HEK293 (cell line): ENCODE measurements at regions of chr16 and their contacts with region 1.

Region 1: GRCh38 chr16:74275002-74275636 is 21.5 kb upstream of the PSMD7 start:
- H3K4me3 ChIP-seq: no peak overlapping the region
- H3K27ac ChIP-seq: no peak overlapping the region
- H3K4me1 ChIP-seq: no peaks in the 10 kb centered on the region
- CTCF ChIP-seq: peak; percentile 46; the same call in 1 of the 2 replicates

Region 2: GRCh38 chr16:74034862-74035261 is 240.3 kb before region 1 on chr16:
- CTCF ChIA-PET with region 1: interaction called, 14 read pairs
- POLR2A ChIA-PET with region 1: no interaction called
- H3K4me3 ChIP-seq: no peak overlapping the region
- H3K27ac ChIP-seq: no peak overlapping the region
- H3K4me1 ChIP-seq: no peaks in the 10 kb centered on the region; the same call in 1 of the 2 replicates
- CTCF ChIP-seq: no peak

Region 3: DNA sequence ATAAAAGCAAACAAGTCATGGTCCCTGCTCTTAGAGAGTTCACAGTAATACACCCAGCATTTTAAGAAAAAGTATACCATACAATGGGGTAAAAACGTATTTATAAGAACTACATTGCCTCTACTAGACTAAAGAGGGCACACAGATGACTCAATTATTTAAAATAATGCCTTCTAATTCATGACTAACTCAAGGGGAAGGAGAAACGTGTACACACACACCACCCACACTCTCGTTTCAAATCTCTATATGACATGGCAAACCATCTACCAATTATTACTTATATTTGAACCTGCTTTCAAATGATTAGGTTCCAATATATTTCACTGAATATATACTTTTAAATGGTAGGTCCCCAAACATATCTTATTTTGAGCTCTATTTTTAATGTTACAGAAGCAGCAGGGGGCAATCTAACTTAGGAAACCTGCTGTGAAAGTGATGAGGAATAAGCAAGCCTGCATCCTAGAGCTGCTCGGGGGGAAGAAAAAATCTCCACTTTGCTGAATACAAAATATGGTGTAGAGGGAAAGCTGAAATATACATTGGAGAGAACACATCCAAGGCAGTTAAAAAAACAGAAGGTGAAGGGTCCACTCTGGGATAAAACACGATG is 210.9 kb before region 1 on chr16:
- CTCF ChIA-PET with region 1: interaction called, 13 read pairs
- POLR2A ChIA-PET with region 1: no interaction called
- H3K4me3 ChIP-seq: no peak overlapping the region
- H3K27ac ChIP-seq: no peak overlapping the region
- H3K4me1 ChIP-seq: no peaks in the 10 kb centered on the region
- CTCF ChIP-seq: no peak

Region 4: DNA sequence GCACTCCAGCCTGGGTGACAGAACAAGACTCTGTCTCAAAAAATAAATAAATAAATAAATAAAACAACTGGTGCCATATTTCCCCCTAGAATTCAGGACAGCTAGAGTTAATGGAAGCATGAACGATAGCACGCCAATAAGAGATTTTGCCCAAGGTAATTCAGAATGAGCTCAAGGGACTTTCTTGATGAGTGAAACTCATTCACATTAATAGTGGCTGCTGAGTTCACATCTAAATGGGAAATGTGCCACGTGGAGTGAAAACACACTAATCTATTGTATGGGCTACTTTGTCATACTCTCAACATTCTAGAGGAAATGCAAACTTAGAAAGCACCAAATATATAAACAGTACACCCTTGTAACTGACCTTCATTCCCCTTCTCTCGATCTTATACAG is 25.9 kb before region 1 on chr16:
- CTCF ChIA-PET with region 1: interaction called, 16 read pairs
- POLR2A ChIA-PET with region 1: no interaction called
- H3K4me3 ChIP-seq: no peak overlapping the region
- H3K27ac ChIP-seq: no peak overlapping the region
- H3K4me1 ChIP-seq: no peaks in the 10 kb centered on the region
- CTCF ChIP-seq: no peak

Region 5: DNA sequence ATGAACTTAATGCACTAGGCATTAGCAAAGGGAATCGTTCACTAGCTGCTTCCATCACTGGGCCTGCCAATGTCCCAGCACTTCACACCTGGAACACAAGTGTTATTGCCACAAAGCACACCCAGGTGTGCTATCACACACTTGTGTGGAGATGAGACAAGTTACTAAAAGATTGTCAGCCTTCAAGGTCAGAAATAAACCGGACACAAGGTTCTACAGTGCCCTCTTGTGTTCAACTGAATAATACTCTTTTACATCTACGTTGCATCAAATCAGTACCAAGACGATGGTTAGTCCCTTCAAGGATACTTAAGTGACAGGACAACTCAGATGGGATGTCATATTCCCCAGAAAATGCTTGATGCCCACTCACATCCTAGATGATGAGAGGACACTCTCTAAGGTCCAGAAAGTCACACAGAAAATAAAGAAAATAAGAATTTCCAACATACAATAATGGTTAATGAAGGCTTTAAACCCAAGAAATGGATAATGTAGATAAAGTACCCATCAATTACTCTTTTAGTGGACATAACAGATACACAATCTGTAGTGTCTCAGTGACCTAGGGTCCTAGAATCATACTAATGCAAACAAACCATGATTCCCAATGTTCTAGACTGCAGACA is 348.2 kb after region 1 on chr16:
- CTCF ChIA-PET with region 1: no interaction called
- POLR2A ChIA-PET with region 1: no interaction called
- H3K4me3 ChIP-seq: no peak overlapping the region
- H3K27ac ChIP-seq: no peak overlapping the region
- H3K4me1 ChIP-seq: no peaks in the 10 kb centered on the region
- CTCF ChIP-seq: peak; percentile 60; the same call in 1 of the 2 replicates